ENCODE measurements at regions of chr10 and their contacts with region 1.

Region 1: DNA sequence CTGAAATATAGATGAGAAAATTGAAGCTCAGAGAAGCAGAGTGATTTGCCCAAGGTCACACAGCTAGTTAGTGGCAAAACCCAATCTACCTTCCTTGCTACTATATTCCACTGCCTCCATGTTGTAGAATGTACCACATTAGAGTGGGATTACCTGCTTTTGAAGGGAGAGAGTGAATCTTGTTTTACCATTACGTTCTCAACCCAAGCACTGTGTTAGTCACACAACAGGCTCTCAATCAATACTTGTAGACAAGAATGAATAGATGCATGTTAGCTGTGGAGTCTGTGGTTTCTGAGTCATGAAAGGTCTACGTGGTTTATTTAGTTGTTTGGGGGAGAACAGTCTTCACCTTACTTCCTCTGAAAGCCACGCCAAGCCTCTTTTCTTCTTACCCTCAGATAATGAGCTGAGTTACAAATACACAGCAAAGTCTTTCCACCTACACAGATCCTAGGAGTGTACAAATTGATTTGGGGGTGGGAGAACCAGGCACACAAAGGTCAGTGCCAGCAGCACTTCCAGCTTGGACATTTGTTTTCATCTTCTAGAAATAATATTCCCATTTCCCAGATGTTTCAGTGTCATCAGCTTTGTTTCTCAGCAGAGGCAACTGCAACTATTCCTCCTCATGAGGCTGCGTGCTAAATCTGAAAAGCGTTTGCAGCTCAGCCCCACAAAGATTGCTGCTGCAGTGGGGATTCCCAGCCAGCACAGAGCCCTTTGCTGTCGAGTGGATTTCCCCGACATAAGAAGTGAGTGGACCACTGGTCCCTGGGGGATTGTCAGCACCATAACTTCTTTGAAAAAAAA is 71.5 kb upstream of the ADO start:
- DNase-seq: peak; percentile 94
- ATAC-seq: peak; percentile 83
- H3K4me3 ChIP-seq: peak overlapping the region; percentile 41; the same call in 1 of the 2 replicates
- H3K27ac ChIP-seq: peak overlapping the region; percentile 93
- H3K4me1 ChIP-seq: peaks cover 50% of the 10 kb centered on the region
- H3K27me3 ChIP-seq: no peaks in the 10 kb centered on the region
- CTCF ChIP-seq: no peak
- EP300 ChIP-seq: peak; percentile 83 to 87; a peak in 3 of 4 replicates
- POLR2A ChIP-seq: no peak; the same call in 1 of the 2 replicates
- RAD21 ChIP-seq: peak; percentile 38; the same call in 1 of the 2 replicates

Region 2: GRCh38 chr10:62632071-62632809 is 100.8 kb before region 1 on chr10:
- CTCF ChIA-PET with region 1: interaction called, 13 read pairs
- POLR2A ChIA-PET with region 1: interaction called, 32 read pairs
- RAD21 ChIA-PET with region 1: interaction called, 73 read pairs
- SMC1A ChIA-PET with region 1: interaction called, 128 read pairs
- in situ Hi-C with region 1: no loop called
- intact Hi-C with region 1: loop called (anchors 1 kb)
- DNase-seq: peak; percentile 80
- ATAC-seq: peak; percentile 85
- H3K4me3 ChIP-seq: 0 out of 2 replicates have a peak overlapping the region, but pooled peaks have one; percentile 1
- H3K27ac ChIP-seq: peak overlapping the region; percentile 71
- H3K4me1 ChIP-seq: peaks cover 56% of the 10 kb centered on the region
- H3K27me3 ChIP-seq: no peaks in the 10 kb centered on the region
- CTCF ChIP-seq: no peak
- EP300 ChIP-seq: peak; percentile 75 to 94
- POLR2A ChIP-seq: no peak
- RAD21 ChIP-seq: peak; percentile 29; the same call in 1 of the 2 replicates

Region 3: GRCh38 chr10:62653254-62653653 is 79.8 kb before region 1 on chr10:
- CTCF ChIA-PET with region 1: interaction called, 8 read pairs
- POLR2A ChIA-PET with region 1: interaction called, 8 read pairs
- RAD21 ChIA-PET with region 1: interaction called, 70 read pairs
- SMC1A ChIA-PET with region 1: interaction called, 77 read pairs
- in situ Hi-C with region 1: no loop called
- intact Hi-C with region 1: loop called (anchors 1 kb)
- DNase-seq: peak; percentile 97
- ATAC-seq: peak; percentile 85
- H3K4me3 ChIP-seq: no peak overlapping the region
- H3K27ac ChIP-seq: peak overlapping the region; percentile 90
- H3K4me1 ChIP-seq: peaks cover 50% of the 10 kb centered on the region
- H3K27me3 ChIP-seq: no peaks in the 10 kb centered on the region
- CTCF ChIP-seq: no peak
- EP300 ChIP-seq: peak; percentile 99
- POLR2A ChIP-seq: no peak
- RAD21 ChIP-seq: peak; percentile 45; the same call in 1 of the 2 replicates

Region 4: GRCh38 chr10:62748386-62748785 is 15.3 kb after region 1 on chr10:
- CTCF ChIA-PET with region 1: interaction called, 8 read pairs
- POLR2A ChIA-PET with region 1: interaction called, 10 read pairs
- RAD21 ChIA-PET with region 1: interaction called, 31 read pairs
- SMC1A ChIA-PET with region 1: interaction called, 72 read pairs
- in situ Hi-C with region 1: no loop called
- intact Hi-C with region 1: no loop called
- DNase-seq: no peak
- ATAC-seq: peak; percentile 45
- H3K4me3 ChIP-seq: no peak overlapping the region
- H3K27ac ChIP-seq: no peak overlapping the region
- H3K4me1 ChIP-seq: peaks cover 13% of the 10 kb centered on the region; the same call in 1 of the 2 replicates
- H3K27me3 ChIP-seq: no peaks in the 10 kb centered on the region
- CTCF ChIP-seq: no peak
- EP300 ChIP-seq: no peak
- POLR2A ChIP-seq: no peak
- RAD21 ChIP-seq: peak; percentile 37; the same call in 1 of the 2 replicates

Region 5: DNA sequence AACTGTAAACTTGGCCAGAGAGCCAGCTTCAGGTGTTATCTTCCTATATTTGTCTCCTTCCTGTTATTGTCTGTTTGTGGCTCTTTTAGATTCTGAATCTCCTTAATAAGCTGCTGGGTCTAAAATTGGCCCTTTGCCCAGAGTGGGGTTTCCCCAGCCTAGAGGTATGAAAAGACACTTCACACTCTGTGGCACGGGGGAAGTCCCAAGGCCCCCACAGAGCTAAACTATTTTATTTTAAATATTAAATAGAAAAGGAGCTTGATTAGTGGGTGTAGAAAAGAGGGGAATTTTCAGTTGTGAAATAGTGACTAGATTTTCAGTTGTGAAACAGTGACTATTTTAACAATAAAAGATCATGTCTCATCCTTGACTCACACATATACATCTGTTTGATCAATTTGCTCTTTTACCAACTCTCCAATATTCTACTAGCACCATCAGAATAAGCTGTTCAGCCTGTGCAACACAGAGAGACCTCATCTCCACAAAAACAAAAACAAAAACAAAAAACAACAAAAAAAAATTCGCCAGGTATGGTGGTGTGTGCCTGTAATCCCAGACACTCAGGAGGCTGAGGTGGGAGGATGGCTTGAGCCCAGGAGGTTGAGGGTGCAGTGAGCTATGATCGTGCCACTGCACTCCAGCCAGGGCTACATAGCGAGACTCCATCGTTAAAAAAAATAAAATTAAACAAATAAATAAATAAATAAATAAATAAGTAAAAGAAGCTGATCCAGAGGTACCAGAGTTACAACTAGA is 46.6 kb after region 1 on chr10:
- CTCF ChIA-PET with region 1: interaction called, 11 read pairs
- POLR2A ChIA-PET with region 1: interaction called, 20 read pairs
- RAD21 ChIA-PET with region 1: interaction called, 101 read pairs
- SMC1A ChIA-PET with region 1: interaction called, 124 read pairs
- in situ Hi-C with region 1: no loop called
- intact Hi-C with region 1: loop called (anchors 2 kb)
- DNase-seq: peak; percentile 84
- ATAC-seq: peak; percentile 96
- H3K4me3 ChIP-seq: no peak overlapping the region
- H3K27ac ChIP-seq: peak overlapping the region; percentile 75; the same call in 1 of the 2 replicates
- H3K4me1 ChIP-seq: peaks cover 23% of the 10 kb centered on the region
- H3K27me3 ChIP-seq: no peaks in the 10 kb centered on the region
- CTCF ChIP-seq: no peak
- EP300 ChIP-seq: peak; percentile 83 to 84
- POLR2A ChIP-seq: no peak
- RAD21 ChIP-seq: no peak

Measured in GM12878 (cell line).